ENCODE measurements at regions of chr2 and their contacts with region 1.

Region 1: GRCh38 chr2:164061129-164061746 is 325.4 kb upstream of the FIGN start:
- DNase-seq: peak; percentile 21
- ATAC-seq: peak; percentile 59; the same call in 1 of the 2 replicates
- H3K4me3 ChIP-seq: no peak overlapping the region
- H3K27ac ChIP-seq: no peak overlapping the region
- H3K4me1 ChIP-seq: no peaks in the 10 kb centered on the region
- H3K27me3 ChIP-seq: no peaks in the 10 kb centered on the region
- CTCF ChIP-seq: peak; percentile 66
- POLR2A ChIP-seq: no peak
- RAD21 ChIP-seq: peak; percentile 66

Region 2: DNA sequence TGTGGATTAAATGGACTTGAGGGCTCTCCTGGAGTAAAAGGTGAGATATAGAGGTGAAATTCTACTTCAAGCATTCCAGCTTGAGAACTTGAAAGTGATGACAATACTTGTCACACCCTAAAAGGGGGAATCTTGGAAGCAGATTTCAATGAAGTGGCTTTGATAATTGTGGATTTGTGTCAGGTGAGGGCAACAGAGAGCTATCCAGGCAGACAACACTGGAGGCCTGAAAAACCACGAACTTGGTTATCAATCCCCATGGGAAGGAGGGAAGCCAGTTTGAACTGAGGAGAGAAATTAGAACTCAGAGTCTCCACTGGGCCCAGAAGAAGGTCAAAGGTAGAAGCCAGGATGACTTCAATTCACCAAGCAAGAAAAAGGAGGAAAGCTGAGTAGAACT is 589.3 kb before region 1 on chr2:
- CTCF ChIA-PET with region 1: no interaction called
- POLR2A ChIA-PET with region 1: no interaction called
- dilution Hi-C with region 1: no loop called
- in situ Hi-C with region 1: no loop called
- intact Hi-C with region 1: loop called (anchors 1 kb)
- DNase-seq: peak; percentile 3
- ATAC-seq: no peak
- H3K4me3 ChIP-seq: no peak overlapping the region
- H3K27ac ChIP-seq: no peak overlapping the region
- H3K4me1 ChIP-seq: no peaks in the 10 kb centered on the region
- H3K27me3 ChIP-seq: no peaks in the 10 kb centered on the region
- CTCF ChIP-seq: peak; percentile 38
- POLR2A ChIP-seq: no peak
- RAD21 ChIP-seq: peak; percentile 51

Region 3: GRCh38 chr2:164213916-164214315 is 152.7 kb after region 1 on chr2:
- CTCF ChIA-PET with region 1: no interaction called
- POLR2A ChIA-PET with region 1: no interaction called
- dilution Hi-C with region 1: no loop called
- in situ Hi-C with region 1: no loop called
- intact Hi-C with region 1: no loop called
- DNase-seq: no peak
- ATAC-seq: no peak
- H3K4me3 ChIP-seq: no peak overlapping the region
- H3K27ac ChIP-seq: no peak overlapping the region
- H3K4me1 ChIP-seq: no peaks in the 10 kb centered on the region
- H3K27me3 ChIP-seq: no peaks in the 10 kb centered on the region
- CTCF ChIP-seq: no peak
- POLR2A ChIP-seq: no peak
- RAD21 ChIP-seq: no peak

Measured in IMR-90 (cell line).